ENCODE measurements at regions of chr12 and their contacts with region 1.

Region 1: DNA sequence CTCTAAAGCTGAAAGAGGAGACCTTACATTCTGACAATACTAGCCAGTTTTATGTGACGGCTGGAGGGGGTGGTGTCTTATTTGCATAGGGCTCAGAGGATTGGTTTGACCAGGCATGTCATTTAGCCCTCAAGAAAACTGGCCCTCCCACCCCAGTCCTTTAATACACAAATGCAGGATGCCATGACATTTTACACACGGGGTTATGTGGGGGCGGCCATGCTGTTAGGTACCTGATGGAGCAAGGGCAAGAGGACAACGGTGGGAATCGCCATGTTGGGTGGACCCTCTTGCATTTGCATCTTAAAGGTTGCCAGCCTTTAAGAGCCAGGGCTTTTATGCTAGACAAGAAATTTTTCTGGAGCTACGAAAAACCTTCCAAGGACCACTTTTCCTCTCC is 23.3 kb downstream of the MDM2 start:
- H3K4me3 Mint-ChIP-seq: no peak overlapping the region
- H3K27ac Mint-ChIP-seq: no peak overlapping the region
- H3K4me1 Mint-ChIP-seq: peaks cover 7% of the 10 kb centered on the region
- H3K27me3 Mint-ChIP-seq: no peaks in the 10 kb centered on the region

Region 2: GRCh38 chr12:68733661-68734071 is 97.6 kb before region 1 on chr12:
- intact Hi-C with region 1: no loop called
- H3K4me3 Mint-ChIP-seq: no peak overlapping the region
- H3K27ac Mint-ChIP-seq: no peak overlapping the region
- H3K4me1 Mint-ChIP-seq: no peaks in the 10 kb centered on the region
- H3K27me3 Mint-ChIP-seq: no peaks in the 10 kb centered on the region

Region 3: GRCh38 chr12:69595689-69596088 is 764.4 kb after region 1 on chr12:
- intact Hi-C with region 1: loop called (anchors 10 kb)
- H3K4me3 Mint-ChIP-seq: no peak overlapping the region
- H3K27ac Mint-ChIP-seq: no peak overlapping the region
- H3K4me1 Mint-ChIP-seq: no peaks in the 10 kb centered on the region
- H3K27me3 Mint-ChIP-seq: no peaks in the 10 kb centered on the region

Measured in dendritic cell treated with granulocyte-macrophage colony-stimulating factor and Interleukin-4, amounts not matched to agents 40 ng/mL and 50 ng/mL, for 4 days (primary cell).